Tibial artery (tissue), 4 donors: ENCODE measurements at regions of chr19 and their contacts with region 1.

Region 1: DNA sequence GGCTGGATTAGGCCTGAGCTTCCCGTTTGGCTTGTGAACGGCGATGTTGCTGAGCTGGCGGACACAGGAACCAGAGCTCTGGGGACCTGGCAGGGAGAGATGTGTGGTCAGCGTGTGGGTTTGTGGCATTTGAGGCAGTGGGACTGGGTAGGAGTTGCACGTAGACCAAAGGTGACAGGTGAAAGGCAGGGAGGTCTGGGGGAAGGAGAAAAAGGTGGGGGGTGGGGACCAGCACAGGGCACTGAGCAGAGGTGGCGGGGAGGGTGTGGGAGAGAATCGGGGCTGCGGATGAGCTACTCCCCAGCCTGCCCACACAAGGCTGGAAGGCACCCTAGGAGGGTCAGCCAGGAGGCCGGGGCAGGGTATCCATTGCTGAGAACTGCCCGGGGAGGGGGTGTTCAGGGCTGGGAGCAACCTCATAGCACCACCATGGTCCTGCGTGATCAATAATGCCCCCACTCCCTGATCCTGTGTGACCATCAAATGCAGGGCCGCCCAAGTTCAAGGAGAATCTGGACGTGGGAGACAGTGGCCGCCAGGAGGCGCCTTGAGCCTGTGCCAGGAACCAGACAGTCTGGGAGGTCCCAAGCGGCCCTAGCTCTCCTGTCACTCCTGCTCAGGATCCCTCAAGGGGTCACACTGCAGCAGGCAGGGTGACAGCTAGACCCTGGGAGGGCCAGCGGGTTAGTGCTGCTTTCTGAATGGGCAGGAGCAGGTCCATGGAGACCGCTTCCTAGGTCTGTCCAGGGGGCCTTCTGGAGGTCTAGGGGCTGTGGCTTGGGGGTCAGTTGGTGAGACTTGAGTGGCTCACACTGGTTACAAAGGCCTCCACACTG is 12.8 kb upstream of the SELENOW start:
- DNase-seq: peak in 1 of 2 donors; percentile 79
- H3K4me3 ChIP-seq: no peak overlapping the region
- H3K27ac ChIP-seq: no peak overlapping the region
- H3K4me1 ChIP-seq: peaks cover 0 to 7% (median 0%) of the 10 kb centered on the region in 4 donors
- H3K27me3 ChIP-seq: no peaks in the 10 kb centered on the region
- CTCF ChIP-seq: peak; percentile 77 to 84

Region 2: DNA sequence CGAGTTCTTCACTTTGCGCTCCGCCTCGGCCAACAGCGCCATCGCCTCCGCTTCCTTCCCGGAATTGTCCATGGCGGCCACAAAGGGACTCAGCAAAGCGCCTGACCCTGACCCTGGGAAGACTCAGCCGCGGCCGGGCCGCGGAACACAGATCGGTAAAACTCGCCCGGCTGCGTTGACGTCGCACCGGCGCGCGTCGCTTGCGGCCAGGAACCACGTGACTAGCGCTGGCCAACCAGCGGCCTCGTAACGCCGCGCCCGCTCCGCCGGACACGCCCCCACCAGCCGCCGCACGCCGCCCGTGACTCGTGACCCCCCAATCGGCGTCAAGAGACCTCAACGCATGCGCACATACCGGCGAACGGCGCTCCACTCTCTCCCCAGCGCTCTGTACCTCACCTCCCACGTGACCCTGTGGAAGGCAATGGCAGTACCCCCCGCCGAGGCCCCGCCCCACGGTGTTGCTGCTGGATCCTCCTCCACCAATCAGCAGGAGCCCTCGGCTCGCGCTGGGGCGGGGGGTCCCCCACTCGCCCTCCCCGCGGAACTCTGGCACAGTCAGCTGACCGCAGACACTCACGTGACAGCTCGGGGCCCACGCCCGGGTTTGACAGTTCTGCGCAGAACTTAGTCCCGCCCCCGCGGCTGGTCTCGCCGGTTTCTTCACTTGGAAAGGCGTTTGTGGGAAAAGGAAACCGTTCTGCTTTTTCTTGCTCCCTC is 250.7 kb before region 1 on chr19 and contains the start of gene NAPA:
- intact Hi-C with region 1: no loop called
- DNase-seq: peak; percentile 100
- H3K4me3 ChIP-seq: peak within 1 kb of the TSS; percentile 73 to 93
- H3K27ac ChIP-seq: peak within 1 kb of the TSS; percentile 86 to 97
- H3K4me1 ChIP-seq: peaks cover 14 to 48% (median 40%) of the 10 kb centered on the region in 4 donors
- H3K27me3 ChIP-seq: no peaks in the 10 kb centered on the region
- CTCF ChIP-seq: no peak

Region 3: DNA sequence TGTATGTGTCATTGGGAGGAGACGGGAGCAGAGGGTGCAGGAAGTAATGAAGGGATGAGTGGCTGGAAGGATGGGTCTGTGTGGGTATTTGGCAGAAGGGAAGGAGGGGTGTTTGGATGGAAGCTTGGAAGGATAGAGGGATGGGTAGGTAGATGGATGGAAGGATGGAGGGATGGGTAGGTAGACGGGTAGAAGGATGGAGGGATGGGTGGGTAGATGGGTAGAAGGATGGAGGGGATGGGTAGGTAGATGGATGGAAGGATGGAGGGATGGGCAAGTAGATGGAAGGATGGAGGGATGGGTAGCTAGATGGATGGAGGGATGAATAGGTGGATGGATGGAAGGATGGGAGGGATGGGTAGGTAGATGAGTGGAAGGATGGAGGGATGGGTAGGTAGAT is 94.2 kb before region 1 on chr19:
- intact Hi-C with region 1: no loop called
- DNase-seq: no peak
- H3K4me3 ChIP-seq: no peak overlapping the region
- H3K27ac ChIP-seq: no peak overlapping the region
- H3K4me1 ChIP-seq: peaks cover 0 to 10% (median 0%) of the 10 kb centered on the region in 4 donors
- H3K27me3 ChIP-seq: no peaks in the 10 kb centered on the region
- CTCF ChIP-seq: no peak

Region 4: GRCh38 chr19:47682939-47683338 is 82.8 kb before region 1 on chr19:
- intact Hi-C with region 1: no loop called
- DNase-seq: no peak
- H3K4me3 ChIP-seq: no peak overlapping the region
- H3K27ac ChIP-seq: no peak overlapping the region
- H3K4me1 ChIP-seq: no peaks in the 10 kb centered on the region
- H3K27me3 ChIP-seq: no peaks in the 10 kb centered on the region
- CTCF ChIP-seq: no peak

Region 5: GRCh38 chr19:47819858-47820257 is 54.1 kb after region 1 on chr19:
- intact Hi-C with region 1: no loop called
- DNase-seq: no peak
- H3K4me3 ChIP-seq: no peak overlapping the region
- H3K27ac ChIP-seq: no peak overlapping the region
- H3K4me1 ChIP-seq: no peaks in the 10 kb centered on the region
- H3K27me3 ChIP-seq: peaks cover 0 to 53% of the 10 kb centered on the region in 2 donors
- CTCF ChIP-seq: no peak

Region 6: GRCh38 chr19:47863514-47863936 is 97.8 kb after region 1 on chr19:
- intact Hi-C with region 1: loop called (anchors 5 kb)
- DNase-seq: peak; percentile 77 to 87
- H3K4me3 ChIP-seq: no peak overlapping the region
- H3K27ac ChIP-seq: no peak overlapping the region
- H3K4me1 ChIP-seq: no peaks in the 10 kb centered on the region
- H3K27me3 ChIP-seq: peaks cover 0 to 20% of the 10 kb centered on the region in 2 donors
- CTCF ChIP-seq: peak; percentile 75 to 89